Activated B cell treated with CpG ODN at 0.5 μM for 24 hours (primary cell): ENCODE measurements at regions of chr22 and their contacts with region 1.

Region 1: DNA sequence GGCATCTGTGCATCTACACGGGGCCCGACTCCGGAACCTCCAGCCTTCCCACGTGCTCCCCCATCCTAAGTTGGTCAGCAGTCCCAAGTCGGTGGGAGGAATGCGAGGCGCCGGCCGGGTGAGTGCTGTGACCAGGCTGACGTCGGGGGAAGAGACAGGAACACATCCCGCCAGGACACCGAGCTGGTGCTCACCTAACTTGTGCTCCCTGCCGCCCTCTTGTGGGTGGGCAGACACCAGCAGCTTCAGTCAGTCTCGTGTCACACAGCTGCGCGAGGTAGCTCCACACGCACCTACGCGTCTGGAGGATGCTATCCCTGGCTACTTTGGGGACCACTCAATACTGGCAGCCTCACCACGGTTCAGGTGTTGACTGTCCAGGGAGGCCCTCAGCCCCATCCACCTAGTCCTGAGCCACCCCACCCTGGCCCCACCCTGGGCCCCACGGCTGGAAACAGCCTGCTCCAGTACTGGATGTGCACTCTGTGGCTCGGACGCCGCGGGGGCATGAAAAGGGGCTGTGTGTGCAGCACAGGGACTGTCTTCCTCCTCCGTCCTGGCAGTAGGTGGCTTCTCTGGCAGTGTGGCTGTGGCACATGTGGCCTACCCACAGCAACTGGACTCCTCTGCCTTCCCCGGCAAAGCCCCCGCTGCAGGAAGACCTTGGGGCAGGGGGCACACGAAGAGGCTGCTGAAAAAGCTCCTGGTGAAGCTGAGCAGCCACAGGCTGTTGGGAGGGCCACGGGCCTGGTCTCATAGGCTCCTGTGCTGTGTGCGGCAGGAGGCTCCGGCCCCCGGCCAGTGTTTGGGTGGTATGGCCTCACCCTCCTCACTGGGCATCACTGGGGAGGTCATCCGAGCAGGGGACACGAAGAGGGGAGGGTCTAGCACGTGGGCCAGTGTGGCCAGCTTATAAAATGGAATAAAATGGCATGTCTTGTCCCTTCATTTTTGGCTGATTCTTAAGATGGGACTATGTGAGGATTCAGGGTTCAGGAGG is 11.2 kb upstream of the BID start:
- DNase-seq: peak; percentile 65
- ATAC-seq: peak; percentile 30
- H3K4me3 Mint-ChIP-seq: no peak overlapping the region
- H3K27ac Mint-ChIP-seq: peak overlapping the region; percentile 59
- H3K4me1 Mint-ChIP-seq: peaks cover 34% of the 10 kb centered on the region
- H3K27me3 Mint-ChIP-seq: no peaks in the 10 kb centered on the region
- CTCF ChIP-seq: no peak

Region 2: GRCh38 chr22:17562906-17563870 is 222.3 kb before region 1 on chr22 and contains the start of gene SLC25A18:
- CTCF ChIA-PET with region 1: interaction called, 7 read pairs
- POLR2A ChIA-PET with region 1: no interaction called
- intact Hi-C with region 1: loop called (anchors 1 kb)
- DNase-seq: no peak
- ATAC-seq: no peak
- H3K4me3 Mint-ChIP-seq: no peak within 1 kb of the TSS
- H3K27ac Mint-ChIP-seq: no peak within 1 kb of the TSS
- H3K4me1 Mint-ChIP-seq: no peaks in the 10 kb centered on the region
- H3K27me3 Mint-ChIP-seq: peaks cover 5% of the 10 kb centered on the region
- CTCF ChIP-seq: no peak
- total RNA-seq, gene SLC25A18: 0.15 and 0.27 TPM in 2 replicates

Region 3: DNA sequence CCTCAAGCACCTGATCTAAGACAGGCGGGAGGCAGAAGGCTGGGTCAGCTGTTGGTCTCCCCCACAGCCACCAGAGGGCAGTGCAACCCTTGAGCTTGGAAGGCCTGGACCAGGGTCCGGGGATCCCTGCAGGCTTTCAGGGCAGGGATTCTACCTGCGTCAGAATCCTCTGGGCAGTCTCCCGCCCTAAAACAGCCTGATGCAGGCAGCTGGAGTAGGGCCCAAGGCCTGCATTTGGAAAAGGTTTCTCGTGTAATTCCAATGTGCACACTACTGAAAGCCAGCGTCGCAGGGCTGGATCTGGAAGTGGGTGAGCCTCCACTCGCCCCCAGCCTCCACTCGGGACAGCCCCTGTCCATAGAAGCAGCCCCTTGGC is 43.0 kb before region 1 on chr22:
- CTCF ChIA-PET with region 1: interaction called, 63 read pairs
- POLR2A ChIA-PET with region 1: interaction called, 11 read pairs
- intact Hi-C with region 1: loop called (anchors 1 kb)
- DNase-seq: peak; percentile 59
- ATAC-seq: peak; percentile 95
- H3K4me3 Mint-ChIP-seq: no peak overlapping the region
- H3K27ac Mint-ChIP-seq: no peak overlapping the region
- H3K4me1 Mint-ChIP-seq: peaks cover 9% of the 10 kb centered on the region
- H3K27me3 Mint-ChIP-seq: no peaks in the 10 kb centered on the region
- CTCF ChIP-seq: no peak

Region 4: GRCh38 chr22:17754233-17754925 is 31.1 kb before region 1 on chr22:
- CTCF ChIA-PET with region 1: interaction called, 10 read pairs
- POLR2A ChIA-PET with region 1: no interaction called
- intact Hi-C with region 1: loop called (anchors 1 kb)
- DNase-seq: no peak
- ATAC-seq: peak; percentile 60
- H3K4me3 Mint-ChIP-seq: no peak overlapping the region
- H3K27ac Mint-ChIP-seq: no peak overlapping the region
- H3K4me1 Mint-ChIP-seq: peaks cover 3% of the 10 kb centered on the region
- H3K27me3 Mint-ChIP-seq: no peaks in the 10 kb centered on the region
- CTCF ChIP-seq: no peak

Region 5: DNA sequence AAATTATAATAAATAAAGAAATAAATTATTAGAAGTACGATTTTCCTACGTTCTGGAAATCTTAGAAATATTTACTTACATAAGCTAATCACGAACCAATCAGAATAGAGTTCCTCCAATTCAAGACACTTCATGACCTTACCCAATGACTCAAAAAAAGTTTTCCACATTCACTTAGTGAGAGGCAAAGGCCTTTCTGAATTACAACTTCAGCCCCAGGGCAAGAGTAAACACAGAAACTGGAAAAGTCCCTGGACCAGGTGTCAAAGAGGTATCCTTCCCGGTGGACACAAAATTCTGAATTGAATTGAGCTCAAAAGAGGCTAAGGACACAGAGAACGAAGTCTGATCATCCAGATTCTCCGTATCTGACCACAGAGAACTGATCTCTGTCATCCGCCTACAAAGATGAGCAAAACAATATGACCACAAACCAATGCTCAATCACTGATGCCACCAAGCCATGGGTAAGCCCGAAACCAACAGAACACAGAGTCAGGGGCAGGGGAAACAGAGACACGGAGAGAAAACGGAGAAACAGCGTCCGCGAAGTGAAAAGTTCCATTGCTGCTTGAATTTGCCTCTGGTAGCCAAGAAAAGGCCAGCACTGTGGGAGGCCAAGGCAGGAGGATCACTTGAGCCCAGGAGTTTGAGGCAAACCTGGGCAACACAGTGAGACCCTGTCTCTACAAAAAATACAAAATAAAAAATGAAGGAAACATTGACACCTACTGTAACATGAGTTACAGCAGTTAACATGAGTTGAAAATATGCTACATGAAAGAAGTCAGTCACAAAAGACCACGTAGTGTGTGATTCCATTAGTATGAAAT is 18.0 kb before region 1 on chr22:
- CTCF ChIA-PET with region 1: interaction called, 23 read pairs
- POLR2A ChIA-PET with region 1: interaction called, 68 read pairs
- intact Hi-C with region 1: no loop called
- DNase-seq: no peak
- ATAC-seq: peak; percentile 59
- H3K4me3 Mint-ChIP-seq: peak overlapping the region; percentile 62
- H3K27ac Mint-ChIP-seq: peak overlapping the region; percentile 74
- H3K4me1 Mint-ChIP-seq: peaks cover 60% of the 10 kb centered on the region
- H3K27me3 Mint-ChIP-seq: no peaks in the 10 kb centered on the region
- CTCF ChIP-seq: no peak

Region 6: DNA sequence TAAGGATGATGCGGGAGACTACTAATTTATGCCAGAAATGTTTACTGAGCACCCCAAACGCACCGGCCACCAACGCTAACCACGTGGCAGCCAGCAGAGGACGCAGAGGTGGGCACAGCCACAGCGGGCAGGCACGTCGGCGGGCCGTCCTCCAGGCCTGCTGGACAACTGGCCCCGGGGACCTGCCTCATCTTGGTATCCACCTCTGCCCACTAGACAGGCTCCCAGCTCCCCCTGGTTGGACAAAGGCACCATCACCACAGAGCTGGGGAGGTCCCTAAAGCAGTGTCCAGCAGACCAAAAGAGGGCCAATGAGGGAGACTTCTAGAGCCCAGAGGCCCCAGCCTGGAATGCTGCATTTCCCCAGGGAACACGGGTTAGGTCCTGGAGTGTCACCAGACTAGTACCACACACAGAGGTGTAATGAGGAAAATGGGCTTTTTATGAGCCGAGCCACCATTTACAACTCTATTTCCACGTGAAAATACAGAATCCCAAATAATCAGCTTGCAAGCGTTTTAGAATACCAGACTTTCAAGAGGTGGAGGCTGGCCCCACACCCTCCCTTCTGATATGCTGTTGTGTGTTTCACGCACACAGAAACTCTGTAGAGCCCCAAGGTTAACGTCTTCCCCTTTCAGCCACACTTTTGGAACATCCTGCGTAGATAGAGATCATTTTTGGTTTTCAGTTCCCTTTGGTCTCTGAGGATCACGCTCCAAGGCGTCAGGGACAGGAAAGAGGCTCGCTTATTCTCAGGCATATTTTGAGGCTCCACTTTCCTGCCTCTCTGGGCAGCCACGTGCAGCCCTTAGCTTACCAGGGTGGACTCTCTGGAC is 12.5 kb after region 1 on chr22:
- CTCF ChIA-PET with region 1: interaction called, 22 read pairs
- POLR2A ChIA-PET with region 1: interaction called, 581 read pairs
- intact Hi-C with region 1: loop called (anchors 1 kb)
- DNase-seq: peak; percentile 41
- ATAC-seq: peak; percentile 62
- H3K4me3 Mint-ChIP-seq: peak overlapping the region; percentile 49
- H3K27ac Mint-ChIP-seq: peak overlapping the region; percentile 99
- H3K4me1 Mint-ChIP-seq: peaks cover 87% of the 10 kb centered on the region
- H3K27me3 Mint-ChIP-seq: no peaks in the 10 kb centered on the region
- CTCF ChIP-seq: no peak